Transverse colon (tissue), 4 donors: ENCODE measurements at regions of chr6 and their contacts with region 1.

Region 1: GRCh38 chr6:33788694-33789549 is at the start of gene LEMD2:
- DNase-seq: peak; percentile 95
- H3K4me3 ChIP-seq: peak within 1 kb of the TSS; percentile 73 to 99 (median 88)
- H3K27ac ChIP-seq: peak within 1 kb of the TSS; percentile 96 to 99 (median 98)
- H3K4me1 ChIP-seq: peaks cover 19 to 35% (median 30%) of the 10 kb centered on the region in 4 donors
- H3K27me3 ChIP-seq: peaks cover 9% of the 10 kb centered on the region
- CTCF ChIP-seq: peak in 1 of 5 experiments; percentile 2
- EP300 ChIP-seq: no peak
- POLR2A ChIP-seq: peak; percentile 81
- total RNA-seq, gene LEMD2: 57.3 to 159 (median 112) TPM

Region 2: DNA sequence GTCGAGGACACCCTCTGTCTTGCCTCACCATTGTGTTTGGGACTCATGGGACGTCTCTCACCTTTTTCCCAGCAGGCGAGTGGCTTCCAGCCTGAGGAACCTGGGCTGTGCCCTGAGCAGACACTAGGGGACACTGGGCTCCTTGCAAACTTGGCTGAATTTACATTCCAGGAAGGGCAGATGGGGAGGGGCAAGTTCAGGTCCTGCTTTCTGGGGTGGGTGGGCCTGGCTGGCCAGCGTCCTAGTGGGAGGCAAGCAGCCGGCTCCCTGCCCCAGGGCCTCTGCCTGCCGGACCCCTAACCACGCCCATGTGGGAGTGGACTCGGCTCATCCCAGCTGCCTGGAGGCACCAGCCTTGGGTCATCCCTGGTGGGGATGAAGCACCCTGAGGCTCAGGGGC is 63.0 kb after region 1 on chr6:
- in situ Hi-C with region 1: no loop called
- intact Hi-C with region 1: no loop called
- DNase-seq: peak; percentile 26
- H3K4me3 ChIP-seq: no peak overlapping the region
- H3K27ac ChIP-seq: no peak overlapping the region
- H3K4me1 ChIP-seq: no peaks in the 10 kb centered on the region
- H3K27me3 ChIP-seq: peaks cover 7% of the 10 kb centered on the region
- CTCF ChIP-seq: peak; percentile 39 to 71 (median 49)
- EP300 ChIP-seq: no peak
- POLR2A ChIP-seq: no peak

Region 3: DNA sequence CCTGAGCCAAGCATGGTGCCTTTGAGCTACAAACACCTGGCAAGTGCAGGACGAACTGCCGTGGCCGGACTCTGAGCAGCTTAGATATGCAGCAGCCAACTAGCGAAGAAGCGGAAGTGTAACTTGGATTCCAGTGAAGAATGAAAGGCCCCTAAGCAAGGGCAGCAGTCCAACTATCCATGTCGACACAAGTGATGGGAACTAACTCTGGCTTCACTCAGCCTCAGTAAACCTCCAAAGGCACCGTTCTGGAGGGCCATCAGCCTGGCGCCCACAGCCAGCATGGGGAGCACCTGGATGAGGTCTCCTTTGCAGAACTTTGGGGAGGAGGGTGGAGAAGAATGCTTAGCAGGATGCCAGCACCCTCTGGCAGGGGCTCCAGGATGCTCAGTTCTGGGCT is 93.2 kb after region 1 on chr6:
- in situ Hi-C with region 1: no loop called
- intact Hi-C with region 1: loop called (anchors 5 kb)
- DNase-seq: peak; percentile 39
- H3K4me3 ChIP-seq: no peak overlapping the region
- H3K27ac ChIP-seq: no peak overlapping the region
- H3K4me1 ChIP-seq: peaks cover 14 to 36% (median 26%) of the 10 kb centered on the region in 4 donors
- H3K27me3 ChIP-seq: no peaks in the 10 kb centered on the region
- CTCF ChIP-seq: no peak
- EP300 ChIP-seq: no peak
- POLR2A ChIP-seq: no peak

Region 4: DNA sequence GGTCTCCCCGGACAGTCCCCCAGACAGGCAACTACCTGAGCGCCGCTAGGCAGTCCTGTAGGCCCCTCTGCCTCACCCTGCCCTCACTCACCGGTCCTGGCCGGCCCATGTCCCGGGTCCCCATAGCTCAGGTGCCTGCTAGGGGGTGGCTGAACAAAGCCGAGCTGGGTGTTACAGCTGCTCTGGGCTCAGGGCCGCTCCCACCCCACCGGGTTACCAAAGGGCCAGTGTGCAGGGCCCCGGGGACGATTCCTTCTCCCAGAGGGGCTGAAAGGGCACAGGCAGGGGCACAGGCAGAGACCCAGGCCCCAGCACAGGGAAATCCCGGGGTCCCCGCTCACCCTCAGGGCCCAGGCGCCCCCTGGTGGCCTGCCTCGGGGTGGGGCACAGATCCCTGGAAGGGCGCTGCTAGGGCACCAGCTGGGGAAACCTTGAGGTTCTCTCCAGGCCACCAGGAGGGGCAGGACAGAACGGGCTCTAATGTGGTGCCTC is 238.6 kb after region 1 on chr6:
- in situ Hi-C with region 1: no loop called
- intact Hi-C with region 1: loop called (anchors 1 kb)
- DNase-seq: peak; percentile 64
- H3K4me3 ChIP-seq: no peak overlapping the region
- H3K27ac ChIP-seq: no peak overlapping the region
- H3K4me1 ChIP-seq: peaks cover 0 to 4% (median 0%) of the 10 kb centered on the region in 4 donors
- H3K27me3 ChIP-seq: no peaks in the 10 kb centered on the region
- CTCF ChIP-seq: peak; percentile 84 to 97 (median 91)
- EP300 ChIP-seq: no peak
- POLR2A ChIP-seq: no peak

Region 5: GRCh38 chr6:35678021-35678654 is 1889.2 kb after region 1 on chr6:
- in situ Hi-C with region 1: no loop called
- intact Hi-C with region 1: no loop called
- DNase-seq: no peak
- H3K4me3 ChIP-seq: no peak overlapping the region
- H3K27ac ChIP-seq: no peak overlapping the region
- H3K4me1 ChIP-seq: peaks cover 6 to 83% (median 34%) of the 10 kb centered on the region in 4 donors
- H3K27me3 ChIP-seq: no peaks in the 10 kb centered on the region
- CTCF ChIP-seq: no peak
- EP300 ChIP-seq: no peak
- POLR2A ChIP-seq: no peak